ENCODE measurements at regions of chr19 and their contacts with region 1.

Region 1: GRCh38 chr19:33176670-33177416 is 17.3 kb upstream of the LRP3 start:
- DNase-seq: peak; percentile 97
- H3K4me3 Mint-ChIP-seq: peak overlapping the region; percentile 97
- H3K27ac Mint-ChIP-seq: peak overlapping the region; percentile 97
- H3K4me1 Mint-ChIP-seq: peaks cover 41% of the 10 kb centered on the region
- H3K27me3 Mint-ChIP-seq: peaks cover 9% of the 10 kb centered on the region

Region 2: DNA sequence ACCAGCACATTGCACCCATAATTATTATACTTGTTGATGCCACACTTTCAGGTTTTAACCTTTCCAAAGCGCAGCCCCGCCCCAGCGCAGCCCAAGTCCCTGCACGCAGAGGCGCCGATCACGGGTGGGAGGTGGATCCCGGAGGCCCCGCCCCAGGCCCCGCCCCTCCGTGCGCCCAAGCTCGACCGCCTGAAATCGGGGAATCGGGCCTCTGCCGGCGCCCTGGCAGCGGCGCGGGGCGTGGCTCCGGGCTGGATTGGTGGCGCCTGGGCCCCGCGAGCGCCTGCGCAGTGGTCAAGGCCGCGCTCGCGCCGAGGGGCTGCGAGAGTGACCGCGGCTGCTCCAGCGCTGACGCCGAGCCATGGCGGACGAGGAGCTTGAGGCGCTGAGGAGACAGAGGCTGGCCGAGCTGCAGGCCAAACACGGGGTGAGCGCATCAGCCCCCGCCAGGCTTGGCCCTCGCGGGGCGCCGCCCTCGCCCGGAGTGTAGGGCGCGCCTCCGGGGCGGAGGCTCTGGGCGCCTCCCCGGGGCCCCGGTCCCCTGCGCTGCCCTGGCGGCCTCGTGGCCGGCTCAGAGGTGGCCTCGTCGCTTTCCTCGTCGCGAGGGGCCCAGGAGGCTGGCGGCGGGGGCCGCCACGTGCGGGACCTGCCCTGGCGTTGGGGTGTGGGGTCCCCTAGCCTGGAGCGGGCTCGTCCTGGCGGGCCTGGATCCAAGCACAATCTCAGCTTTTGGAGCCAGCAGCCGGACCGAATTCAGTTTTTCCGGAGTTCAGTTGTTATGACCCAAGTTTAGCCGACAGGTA is 595.7 kb before region 1 on chr19 and contains the start of gene PDCD5:
- intact Hi-C with region 1: loop called (anchors 2 kb)
- DNase-seq: peak; percentile 91
- H3K4me3 Mint-ChIP-seq: peak within 1 kb of the TSS; percentile 96
- H3K27ac Mint-ChIP-seq: peak within 1 kb of the TSS; percentile 86
- H3K4me1 Mint-ChIP-seq: peaks cover 33% of the 10 kb centered on the region
- H3K27me3 Mint-ChIP-seq: peaks cover 9% of the 10 kb centered on the region
- total RNA-seq, gene PDCD5: 203 TPM in 2 replicates

Region 3: GRCh38 chr19:32971715-32972540 is 204.9 kb before region 1 on chr19 and contains the starts of genes CEP89 and FAAP24:
- intact Hi-C with region 1: loop called (anchors 1 kb)
- DNase-seq: peak; percentile 98
- H3K4me3 Mint-ChIP-seq: peak within 1 kb of the TSS; percentile 96
- H3K27ac Mint-ChIP-seq: peak within 1 kb of the TSS; percentile 86
- H3K4me1 Mint-ChIP-seq: peaks cover 15% of the 10 kb centered on the region
- H3K27me3 Mint-ChIP-seq: no peaks in the 10 kb centered on the region
- total RNA-seq, gene CEP89: 15.5 and 17.2 TPM in 2 replicates
- total RNA-seq, gene FAAP24: 10.7 and 11.2 TPM in 2 replicates

Region 4: GRCh38 chr19:33161201-33161600 is 15.6 kb before region 1 on chr19:
- intact Hi-C with region 1: loop called (anchors 1 kb)
- DNase-seq: no peak
- H3K4me3 Mint-ChIP-seq: no peak overlapping the region
- H3K27ac Mint-ChIP-seq: peak overlapping the region; percentile 94
- H3K4me1 Mint-ChIP-seq: peaks cover 37% of the 10 kb centered on the region
- H3K27me3 Mint-ChIP-seq: no peaks in the 10 kb centered on the region

Region 5: DNA sequence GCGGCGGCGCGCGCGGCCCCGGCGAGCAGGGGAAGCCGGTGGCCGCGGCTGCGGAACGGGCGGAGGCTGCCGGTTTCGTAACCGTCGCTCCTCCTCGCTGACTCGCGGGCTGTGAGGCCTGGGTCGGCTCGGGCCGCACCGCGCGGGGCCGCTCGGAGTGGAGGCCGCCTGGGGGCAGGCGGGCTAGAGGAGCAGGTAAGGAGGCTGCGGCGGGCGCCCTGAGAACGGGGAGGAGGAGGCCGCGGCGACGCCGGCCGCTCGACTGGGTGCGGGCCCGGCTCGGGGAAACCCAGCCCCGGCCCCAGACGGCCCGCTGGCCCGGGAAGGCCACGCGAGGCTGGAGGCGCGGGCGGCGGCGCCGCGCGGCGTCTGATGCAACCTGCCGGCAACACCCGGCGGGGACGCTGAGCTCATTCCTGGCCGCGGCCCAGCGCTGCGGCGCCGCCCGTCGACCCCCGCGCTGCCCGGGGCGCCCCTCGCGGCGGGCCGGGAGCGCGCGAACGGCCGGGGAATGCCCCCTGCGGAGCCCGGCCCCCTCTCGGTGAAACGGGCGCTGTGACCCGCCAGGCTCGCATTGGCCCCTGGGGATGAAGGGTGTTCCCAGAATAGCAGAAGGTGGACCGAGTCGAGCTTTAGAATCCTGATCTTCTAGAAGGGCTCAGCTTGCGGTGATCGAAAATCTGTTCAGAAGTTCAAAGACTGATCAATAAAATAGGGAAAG is 197.0 kb after region 1 on chr19 and contains the start of gene CEBPG:
- intact Hi-C with region 1: loop called (anchors 1 kb)
- DNase-seq: peak; percentile 60
- H3K4me3 Mint-ChIP-seq: peak within 1 kb of the TSS; percentile 93
- H3K27ac Mint-ChIP-seq: peak within 1 kb of the TSS; percentile 69
- H3K4me1 Mint-ChIP-seq: peaks cover 39% of the 10 kb centered on the region
- H3K27me3 Mint-ChIP-seq: no peaks in the 10 kb centered on the region
- total RNA-seq, gene CEBPG: 30.4 and 31.3 TPM in 2 replicates